ENCODE measurements at regions of chr11 and their contacts with region 1.

Region 1: GRCh38 chr11:43358801-43359421 is at the start of gene TTC17:
- DNase-seq: peak; percentile 83 to 94 (median 90)
- ATAC-seq: peak; percentile 98
- H3K4me3 ChIP-seq: peak within 1 kb of the TSS; percentile 57
- H3K4me3 Mint-ChIP-seq: peak within 1 kb of the TSS; percentile 95 to 100 (median 98)
- H3K27ac ChIP-seq: peak within 1 kb of the TSS; percentile 88
- H3K27ac Mint-ChIP-seq: peak within 1 kb of the TSS; percentile 92 to 99 (median 98)
- H3K4me1 ChIP-seq: peaks cover 24 to 27% of the 10 kb centered on the region in 2 donors
- H3K4me1 Mint-ChIP-seq: peaks cover 24 to 60% (median 54%) of the 10 kb centered on the region in 7 donors
- H3K27me3 ChIP-seq: no peaks in the 10 kb centered on the region
- H3K27me3 Mint-ChIP-seq: no peaks in the 10 kb centered on the region
- total RNA-seq, gene TTC17: 85.2 to 132 (median 102) TPM

Region 2: DNA sequence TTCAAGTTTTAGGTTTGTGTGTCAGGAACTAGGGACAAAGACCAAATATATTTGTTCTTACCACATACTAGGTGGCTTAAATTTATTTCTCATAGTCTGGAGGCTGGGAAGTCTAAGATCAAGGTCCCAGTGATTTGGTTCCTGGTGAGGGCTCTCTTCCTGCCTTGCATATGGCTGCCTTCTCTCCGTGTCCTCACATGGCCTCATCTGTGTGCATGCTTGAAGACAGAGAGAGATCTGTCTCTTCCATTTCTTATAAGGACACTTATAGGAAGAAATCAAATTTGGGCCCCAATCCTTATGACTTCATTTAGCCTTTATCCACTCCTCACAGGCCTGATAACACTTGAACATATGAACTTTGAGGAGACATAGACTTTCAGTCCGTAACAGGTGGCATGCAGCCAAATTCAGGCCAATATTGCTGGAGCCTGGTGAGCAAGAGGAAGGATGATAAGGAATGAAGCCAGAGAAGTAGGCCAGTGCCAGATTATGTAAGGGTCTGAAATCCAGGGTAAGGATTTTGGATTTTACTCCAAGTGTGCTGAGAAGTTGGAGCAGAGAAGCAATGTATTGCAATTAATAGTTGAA is 34.9 kb after region 1 on chr11:
- CTCF ChIA-PET with region 1: no interaction called
- POLR2A ChIA-PET with region 1: no interaction called
- intact Hi-C with region 1: loop called in 1 of 2 experiments (anchors 2 kb)
- DNase-seq: no peak
- ATAC-seq: no peak
- H3K4me3 ChIP-seq: no peak overlapping the region
- H3K4me3 Mint-ChIP-seq: no peak overlapping the region
- H3K27ac ChIP-seq: no peak overlapping the region
- H3K27ac Mint-ChIP-seq: peak overlapping the region in 1 of 9 donors; percentile 71
- H3K4me1 ChIP-seq: no peaks in the 10 kb centered on the region
- H3K4me1 Mint-ChIP-seq: peaks cover 0 to 32% (median 7%) of the 10 kb centered on the region in 7 donors
- H3K27me3 ChIP-seq: no peaks in the 10 kb centered on the region
- H3K27me3 Mint-ChIP-seq: no peaks in the 10 kb centered on the region

Region 3: DNA sequence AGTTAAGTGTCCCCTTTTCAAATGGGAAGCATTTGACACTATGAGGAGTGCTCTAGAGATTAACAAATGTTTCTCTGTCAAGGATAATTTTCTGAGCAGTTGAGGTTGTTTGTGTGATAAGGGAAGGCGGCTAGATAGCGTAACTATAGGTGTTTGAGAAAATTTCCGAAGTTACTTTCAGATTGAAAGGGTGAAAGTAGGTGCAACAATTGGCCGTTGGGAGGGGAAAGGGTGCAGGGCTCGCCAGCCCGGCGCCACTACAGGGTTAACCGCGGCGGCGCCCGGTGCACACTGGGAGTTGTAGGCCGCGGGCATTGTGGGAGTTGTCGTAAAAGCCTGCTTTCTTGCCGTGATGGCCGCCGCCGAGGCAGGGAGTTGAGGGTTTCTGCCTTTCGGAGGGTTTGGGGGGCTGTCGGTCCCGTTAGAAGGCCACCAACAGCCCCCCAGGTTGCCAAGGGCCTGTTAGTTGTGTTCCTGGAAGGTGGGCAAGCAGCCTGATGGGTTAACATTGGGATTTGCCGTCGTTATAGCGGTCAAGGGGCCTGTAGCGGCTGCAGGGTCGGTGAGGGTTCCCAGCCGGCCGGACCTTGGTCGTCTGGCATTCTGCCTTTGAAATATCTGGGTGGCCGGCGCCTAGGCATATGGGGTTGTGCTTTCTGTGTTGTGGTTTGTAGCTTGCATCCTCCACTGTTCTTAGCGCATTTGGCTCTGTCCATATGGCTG is 285.1 kb after region 1 on chr11:
- CTCF ChIA-PET with region 1: no interaction called
- POLR2A ChIA-PET with region 1: no interaction called
- intact Hi-C with region 1: loop called in 1 of 2 experiments (anchors 1 kb)
- DNase-seq: peak; percentile 70 to 89 (median 86)
- ATAC-seq: peak; percentile 100
- H3K4me3 ChIP-seq: peak overlapping the region; percentile 95
- H3K4me3 Mint-ChIP-seq: peak overlapping the region; percentile 87 to 98 (median 94)
- H3K27ac ChIP-seq: peak overlapping the region; percentile 85
- H3K27ac Mint-ChIP-seq: peak overlapping the region; percentile 51 to 95 (median 90)
- H3K4me1 ChIP-seq: peaks cover 7 to 10% of the 10 kb centered on the region in 2 donors
- H3K4me1 Mint-ChIP-seq: peaks cover 7 to 31% (median 23%) of the 10 kb centered on the region in 7 donors
- H3K27me3 ChIP-seq: no peaks in the 10 kb centered on the region
- H3K27me3 Mint-ChIP-seq: peaks cover 12 to 18% (median 17%) of the 10 kb centered on the region in 5 donors

Region 4: DNA sequence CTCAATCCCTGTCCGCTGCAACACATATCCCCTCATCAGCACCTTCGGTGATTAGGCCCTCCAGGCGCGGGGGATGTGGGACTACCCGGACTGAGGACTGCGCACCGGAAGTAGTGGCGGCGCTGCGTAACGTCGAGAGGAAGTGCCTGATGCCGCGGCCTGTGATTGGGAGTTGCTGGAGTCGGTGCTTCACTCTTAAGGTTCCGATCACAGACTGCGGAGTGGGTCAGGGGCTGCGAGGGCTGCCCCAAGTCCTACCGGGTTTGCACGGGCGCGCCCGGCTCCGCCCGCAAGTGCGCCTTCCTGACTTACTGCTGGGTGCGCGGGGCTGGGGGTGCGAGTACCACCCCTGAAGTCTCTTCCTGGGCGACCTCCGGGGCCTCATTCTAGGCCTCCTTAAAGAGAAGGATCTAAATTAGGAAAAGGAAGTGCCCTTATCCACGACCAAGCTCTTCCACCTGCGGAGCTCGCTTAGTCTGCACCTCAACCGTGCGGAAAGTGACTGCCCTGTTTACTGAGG is 521.8 kb after region 1 on chr11 and contains the start of gene ALKBH3:
- CTCF ChIA-PET with region 1: no interaction called
- POLR2A ChIA-PET with region 1: interaction called, 6 read pairs
- intact Hi-C with region 1: loop called (anchors 1 to 2 kb)
- DNase-seq: peak; percentile 78 to 92 (median 90)
- ATAC-seq: peak; percentile 100
- H3K4me3 ChIP-seq: peak within 1 kb of the TSS; percentile 90
- H3K4me3 Mint-ChIP-seq: peak within 1 kb of the TSS; percentile 87 to 96 (median 90)
- H3K27ac ChIP-seq: peak within 1 kb of the TSS; percentile 80
- H3K27ac Mint-ChIP-seq: peak within 1 kb of the TSS; percentile 82 to 97 (median 88)
- H3K4me1 ChIP-seq: peaks cover 16 to 19% of the 10 kb centered on the region in 2 donors
- H3K4me1 Mint-ChIP-seq: peaks cover 12 to 47% (median 36%) of the 10 kb centered on the region in 7 donors
- H3K27me3 ChIP-seq: no peaks in the 10 kb centered on the region
- H3K27me3 Mint-ChIP-seq: peaks cover 0 to 22% (median 13%) of the 10 kb centered on the region in 5 donors
- total RNA-seq, gene ALKBH3: 28.9 to 32.8 (median 30.2) TPM

Region 5: DNA sequence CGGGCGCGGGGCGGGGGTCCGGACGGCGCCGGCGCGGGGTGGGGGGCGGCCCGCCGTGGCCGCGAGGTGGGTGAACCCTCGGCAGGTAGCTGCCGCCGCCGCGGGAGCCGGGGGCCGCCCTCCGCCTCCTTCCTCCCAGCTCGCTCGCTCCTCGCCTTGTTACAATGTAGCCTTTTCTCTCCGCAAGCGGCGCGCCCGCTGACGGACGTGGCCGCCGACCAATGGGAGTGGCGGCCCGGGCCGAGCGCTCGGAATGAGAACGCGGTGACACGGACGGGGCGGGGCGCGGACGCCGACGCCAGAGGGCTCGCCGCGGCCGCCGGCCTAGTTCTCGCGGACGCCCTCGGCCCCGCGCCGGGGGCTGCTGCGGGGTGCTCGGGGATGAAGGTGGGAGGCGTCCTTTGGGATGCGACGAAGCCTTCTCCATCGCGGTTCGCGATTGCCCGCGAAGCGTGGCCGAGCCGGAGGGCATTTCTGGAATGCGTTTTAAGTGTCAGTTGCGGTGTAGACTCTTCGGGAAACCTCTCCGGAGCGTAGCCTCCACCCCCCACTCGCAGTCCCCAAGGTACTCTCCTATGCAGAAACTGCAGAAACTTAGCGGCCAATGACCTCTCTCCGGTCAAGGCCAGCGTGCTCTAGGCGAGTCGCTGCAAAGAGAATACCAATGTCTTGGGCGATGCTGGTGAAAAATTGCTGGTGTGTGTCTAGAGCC is 1788.3 kb after region 1 on chr11:
- CTCF ChIA-PET with region 1: no interaction called
- POLR2A ChIA-PET with region 1: no interaction called
- intact Hi-C with region 1: loop called in 1 of 2 experiments (anchors 2 kb)
- DNase-seq: peak; percentile 86 to 93 (median 91)
- ATAC-seq: peak; percentile 98
- H3K4me3 ChIP-seq: peak overlapping the region; percentile 68
- H3K4me3 Mint-ChIP-seq: peak overlapping the region; percentile 85 to 95 (median 92)
- H3K27ac ChIP-seq: peak overlapping the region; percentile 79
- H3K27ac Mint-ChIP-seq: peak overlapping the region; percentile 47 to 95 (median 87)
- H3K4me1 ChIP-seq: peaks cover 13 to 14% of the 10 kb centered on the region in 2 donors
- H3K4me1 Mint-ChIP-seq: peaks cover 13 to 47% (median 43%) of the 10 kb centered on the region in 7 donors
- H3K27me3 ChIP-seq: no peaks in the 10 kb centered on the region
- H3K27me3 Mint-ChIP-seq: peaks cover 4 to 45% (median 10%) of the 10 kb centered on the region in 5 donors